H1 (cell line): ENCODE measurements at regions of chr11 and their contacts with region 1.

Region 1: GRCh38 chr11:78715639-78716311 is 141.1 kb upstream of the NARS2 start:
- DNase-seq: peak; percentile 69 to 86
- H3K4me3 ChIP-seq: no peak overlapping the region
- H3K27ac ChIP-seq: no peak overlapping the region
- H3K4me1 ChIP-seq: no peaks in the 10 kb centered on the region
- H3K27me3 ChIP-seq: no peaks in the 10 kb centered on the region
- CTCF ChIP-seq: peak; percentile 96 to 100 (median 98)
- EP300 ChIP-seq: no peak
- POLR2A ChIP-seq: no peak
- RAD21 ChIP-seq: peak; percentile 87 to 91

Region 2: GRCh38 chr11:78574386-78575381 is 141.1 kb before region 1 on chr11 and contains the start of gene NARS2:
- CTCF ChIA-PET with region 1: no interaction called
- POLR2A ChIA-PET with region 1: no interaction called
- DNase-seq: peak; percentile 87 to 96
- H3K4me3 ChIP-seq: peak within 1 kb of the TSS; percentile 88 to 93 (median 91)
- H3K27ac ChIP-seq: peak within 1 kb of the TSS; percentile 87
- H3K4me1 ChIP-seq: no peaks in the 10 kb centered on the region; a peak in 2 of 7 replicates
- H3K27me3 ChIP-seq: no peaks in the 10 kb centered on the region
- CTCF ChIP-seq: no peak
- EP300 ChIP-seq: no peak
- POLR2A ChIP-seq: peak; percentile 21 to 80
- RAD21 ChIP-seq: no peak
- total RNA-seq, gene NARS2: 46.7 and 51.6 TPM in 2 replicates

Region 3: DNA sequence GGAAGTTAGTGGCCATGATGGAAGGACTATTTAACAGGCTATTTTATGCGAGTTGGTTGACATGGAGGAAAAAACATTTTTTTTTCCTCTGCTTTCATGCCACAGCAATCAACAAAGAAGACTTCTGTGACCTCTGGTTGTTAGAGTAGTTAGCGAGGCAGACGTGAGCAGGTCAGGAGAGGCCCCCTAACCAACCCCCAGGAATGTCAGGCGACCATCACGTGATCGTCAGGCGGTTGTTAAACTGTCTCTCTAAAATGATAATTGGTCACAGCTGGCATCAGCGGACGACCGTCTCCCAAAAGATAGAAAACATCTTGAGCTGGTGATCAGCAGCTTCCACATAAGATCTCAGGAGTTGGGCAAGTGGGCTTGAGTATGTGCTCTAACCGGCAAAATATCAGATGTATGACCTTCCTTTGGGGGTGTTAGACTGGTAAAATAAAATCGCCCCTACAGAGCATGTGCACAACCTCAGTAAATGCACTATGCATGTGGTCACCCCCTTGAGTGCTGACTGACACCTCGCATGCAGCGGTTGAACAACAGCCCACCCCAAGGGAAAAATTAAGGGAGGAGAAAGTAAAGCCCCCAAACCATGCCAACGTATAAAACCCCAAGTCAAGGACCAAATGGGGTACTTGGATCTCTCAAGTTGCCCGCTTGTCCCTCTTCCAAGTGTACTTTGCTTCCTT is 120.2 kb before region 1 on chr11:
- CTCF ChIA-PET with region 1: no interaction called
- POLR2A ChIA-PET with region 1: no interaction called
- DNase-seq: no peak
- H3K4me3 ChIP-seq: no peak overlapping the region; a peak in 1 of 8 replicates
- H3K27ac ChIP-seq: no peak overlapping the region
- H3K4me1 ChIP-seq: peaks cover 3 to 10% (median 7%) of the 10 kb centered on the region in 4 experiments
- H3K27me3 ChIP-seq: no peaks in the 10 kb centered on the region
- CTCF ChIP-seq: no peak
- EP300 ChIP-seq: no peak
- POLR2A ChIP-seq: no peak
- RAD21 ChIP-seq: no peak

Region 4: DNA sequence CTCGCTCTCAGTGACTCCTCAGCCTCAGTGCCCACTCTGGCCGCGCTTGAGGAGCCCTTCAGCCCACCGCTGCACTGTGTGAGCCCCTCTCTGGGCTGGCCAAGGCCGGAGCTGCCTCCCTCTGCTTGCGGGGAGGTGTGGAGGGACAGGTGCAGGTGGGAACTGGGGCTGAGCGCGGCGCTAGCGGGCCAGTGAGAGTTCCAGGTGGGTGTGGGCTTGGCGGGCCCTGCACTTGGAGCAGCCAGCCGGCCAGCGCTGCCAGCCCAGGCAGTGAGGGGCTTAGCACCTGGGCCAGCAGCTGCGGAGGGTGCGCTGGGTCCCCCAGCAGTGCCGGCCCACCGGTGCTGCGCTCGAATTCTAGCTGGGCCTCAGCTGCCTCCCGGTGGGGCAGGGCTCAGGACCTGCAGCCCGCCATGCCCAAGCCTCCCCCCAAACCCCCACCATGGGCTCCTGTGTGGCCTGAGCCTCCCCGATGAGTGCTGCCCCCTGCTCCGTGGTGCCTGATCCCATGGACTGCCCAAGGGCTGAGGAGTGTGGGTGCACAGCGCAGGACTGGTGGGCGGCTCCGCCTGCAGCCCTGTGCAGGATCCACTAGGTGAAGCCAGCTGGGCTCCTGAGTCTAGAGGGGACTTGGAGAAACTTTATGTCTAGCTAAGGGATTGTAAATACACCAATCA is 76.9 kb before region 1 on chr11:
- CTCF ChIA-PET with region 1: interaction called, 314 read pairs
- POLR2A ChIA-PET with region 1: no interaction called
- DNase-seq: peak in 1 of 2 experiments; percentile 37
- H3K4me3 ChIP-seq: no peak overlapping the region
- H3K27ac ChIP-seq: no peak overlapping the region
- H3K4me1 ChIP-seq: no peaks in the 10 kb centered on the region
- H3K27me3 ChIP-seq: no peaks in the 10 kb centered on the region
- CTCF ChIP-seq: no peak
- EP300 ChIP-seq: no peak
- POLR2A ChIP-seq: no peak
- RAD21 ChIP-seq: no peak

Region 5: DNA sequence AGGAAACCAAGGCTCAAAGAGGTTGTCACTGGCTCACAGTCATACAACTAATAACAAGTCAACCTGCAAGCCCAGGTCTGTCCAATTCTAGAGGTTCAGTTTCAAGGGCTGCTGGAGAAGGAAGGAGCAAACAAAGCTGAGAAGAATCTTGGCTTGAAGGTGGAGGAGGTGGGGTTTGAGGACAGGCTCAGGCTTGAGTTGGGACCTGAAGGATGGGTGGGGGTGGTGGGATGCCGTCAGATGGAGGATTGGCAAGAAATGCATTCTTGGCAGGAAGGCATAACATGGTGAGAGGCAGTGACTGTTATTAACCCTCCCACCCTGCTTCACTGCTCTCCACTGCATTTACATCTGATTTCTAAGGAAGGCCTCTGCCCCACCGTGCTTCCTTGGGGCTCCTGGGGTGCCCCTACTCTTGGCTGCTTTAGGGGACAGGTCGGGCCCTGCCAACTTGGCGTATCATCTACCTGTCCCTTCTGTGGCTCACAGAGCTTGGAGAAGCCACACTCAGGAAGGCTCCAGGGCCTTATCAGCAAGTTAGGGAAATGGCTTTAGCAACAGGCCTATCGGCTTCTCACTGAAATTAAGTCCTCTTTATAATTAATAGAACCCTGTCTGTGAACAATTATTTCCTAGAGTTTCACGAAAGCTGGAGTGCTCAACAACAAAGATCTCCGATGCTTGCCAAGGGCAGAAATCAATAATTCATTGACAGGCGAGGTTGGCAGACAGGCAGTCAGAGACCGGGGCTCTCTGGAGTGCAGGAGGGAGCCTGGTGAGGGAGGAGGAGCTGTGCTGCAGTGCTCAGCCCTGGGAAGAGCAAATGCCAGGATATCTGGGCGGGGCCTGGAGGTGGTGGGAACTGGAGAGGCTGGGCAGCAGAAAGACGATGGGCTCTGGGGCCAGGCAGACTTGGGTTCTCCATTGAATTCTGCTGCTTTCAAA is 56.2 kb before region 1 on chr11:
- CTCF ChIA-PET with region 1: interaction called, 58 read pairs
- POLR2A ChIA-PET with region 1: no interaction called
- DNase-seq: peak in 1 of 2 experiments; percentile 46
- H3K4me3 ChIP-seq: no peak overlapping the region
- H3K27ac ChIP-seq: no peak overlapping the region
- H3K4me1 ChIP-seq: no peaks in the 10 kb centered on the region; a peak in 1 of 7 replicates
- H3K27me3 ChIP-seq: no peaks in the 10 kb centered on the region
- CTCF ChIP-seq: no peak
- EP300 ChIP-seq: no peak
- POLR2A ChIP-seq: no peak
- RAD21 ChIP-seq: no peak

Region 6: GRCh38 chr11:78688464-78688863 is 27.3 kb before region 1 on chr11:
- CTCF ChIA-PET with region 1: interaction called, 64 read pairs
- POLR2A ChIA-PET with region 1: interaction called, 3 read pairs
- DNase-seq: no peak
- H3K4me3 ChIP-seq: peak overlapping the region in 1 of 4 experiments; percentile 22; a peak in 1 of 8 replicates
- H3K27ac ChIP-seq: no peak overlapping the region
- H3K4me1 ChIP-seq: peaks cover 0 to 12% (median 8%) of the 10 kb centered on the region in 4 experiments
- H3K27me3 ChIP-seq: no peaks in the 10 kb centered on the region; a peak in 2 of 7 replicates
- CTCF ChIP-seq: no peak
- EP300 ChIP-seq: no peak
- POLR2A ChIP-seq: no peak
- RAD21 ChIP-seq: no peak

Region 7: DNA sequence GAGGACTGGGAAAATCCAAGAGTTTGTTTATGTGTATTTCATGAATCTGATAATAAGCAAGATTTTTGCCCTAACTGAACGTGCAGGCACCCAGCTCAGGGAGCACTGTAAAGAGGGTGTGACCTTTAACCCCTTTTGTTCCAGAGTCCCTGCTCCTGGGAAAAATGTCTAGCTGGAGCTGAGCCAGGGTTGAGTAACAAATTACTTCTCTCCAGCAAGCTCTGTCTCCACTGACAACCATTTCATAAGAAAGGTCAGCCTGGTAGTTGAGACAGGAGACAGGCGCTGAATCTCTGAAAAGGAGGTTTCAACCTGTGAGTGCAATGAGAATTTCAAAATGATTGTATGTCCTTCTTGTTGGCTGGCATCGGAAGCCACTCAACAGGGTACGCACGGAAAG is 15.3 kb after region 1 on chr11:
- CTCF ChIA-PET with region 1: interaction called, 48 read pairs
- POLR2A ChIA-PET with region 1: interaction called, 5 read pairs
- DNase-seq: no peak
- H3K4me3 ChIP-seq: no peak overlapping the region
- H3K27ac ChIP-seq: no peak overlapping the region
- H3K4me1 ChIP-seq: no peaks in the 10 kb centered on the region; a peak in 1 of 7 replicates
- H3K27me3 ChIP-seq: no peaks in the 10 kb centered on the region
- CTCF ChIP-seq: no peak
- EP300 ChIP-seq: no peak
- POLR2A ChIP-seq: no peak
- RAD21 ChIP-seq: no peak

Region 8: DNA sequence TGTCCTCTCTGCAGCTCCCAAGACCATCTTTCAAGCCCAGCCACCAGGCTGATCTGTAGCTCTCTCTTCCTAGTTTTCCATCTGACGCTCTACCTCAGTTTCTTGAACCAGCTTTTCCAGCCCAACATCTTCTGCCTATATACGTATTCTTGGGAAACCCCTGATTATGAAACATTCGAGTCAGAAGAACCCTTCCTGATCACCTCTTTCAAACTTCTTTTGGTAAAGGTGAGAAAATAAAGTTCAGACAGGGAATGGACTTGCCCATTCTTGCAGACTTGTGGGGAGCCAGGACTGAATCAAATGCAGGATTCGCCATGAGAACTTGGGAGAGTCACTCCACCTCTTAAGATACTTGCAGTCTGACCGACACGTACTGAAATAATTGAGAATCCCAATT is 28.4 kb after region 1 on chr11:
- CTCF ChIA-PET with region 1: interaction called, 11 read pairs
- POLR2A ChIA-PET with region 1: no interaction called
- DNase-seq: no peak
- H3K4me3 ChIP-seq: no peak overlapping the region
- H3K27ac ChIP-seq: no peak overlapping the region
- H3K4me1 ChIP-seq: no peaks in the 10 kb centered on the region
- H3K27me3 ChIP-seq: no peaks in the 10 kb centered on the region; a peak in 1 of 7 replicates
- CTCF ChIP-seq: no peak
- EP300 ChIP-seq: no peak
- POLR2A ChIP-seq: no peak
- RAD21 ChIP-seq: no peak